ENCODE measurements at regions of chr10 and their contacts with region 1.

Region 1: DNA sequence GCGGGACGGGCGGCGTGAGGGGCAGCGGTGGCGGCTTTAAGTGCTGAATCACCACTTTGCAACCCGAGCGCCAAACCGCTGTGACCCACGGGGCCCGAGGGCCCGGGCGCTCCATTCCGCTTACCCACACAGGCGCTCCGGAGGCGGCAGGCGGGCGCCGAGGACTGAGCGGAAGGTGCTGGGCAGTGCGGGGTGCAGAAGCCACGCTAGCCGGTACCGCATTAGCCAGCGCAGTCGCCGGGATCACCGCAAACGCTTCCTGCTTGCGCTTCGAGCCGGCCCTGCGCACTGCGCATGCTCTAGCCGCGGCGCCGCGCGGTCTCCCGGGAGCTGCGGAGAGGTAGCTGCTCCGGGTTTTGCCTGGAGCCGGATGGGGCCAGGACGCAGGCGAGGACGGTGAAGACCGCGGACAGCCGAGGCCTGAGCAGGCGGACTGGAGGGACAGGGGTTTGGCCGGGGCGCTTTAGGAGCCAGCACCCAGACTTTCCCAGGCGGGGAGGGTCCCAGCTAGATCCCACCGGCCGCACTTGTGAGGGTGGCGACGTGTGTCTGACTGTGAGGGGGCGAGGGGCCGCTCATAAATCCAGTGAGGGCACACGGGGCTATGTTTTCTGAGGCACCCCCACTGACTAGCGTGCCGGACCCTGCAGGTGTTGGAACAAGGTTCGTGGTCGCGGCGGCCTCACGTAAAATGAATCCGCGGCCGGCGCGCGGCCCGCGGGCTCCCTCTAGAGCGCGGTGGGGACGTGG is at the start of gene IDE:
- DNase-seq: peak; percentile 91 to 97
- H3K4me3 ChIP-seq: peak within 1 kb of the TSS; percentile 69 to 94 (median 76)
- H3K27ac ChIP-seq: peak within 1 kb of the TSS; percentile 90 to 97 (median 95)
- H3K4me1 ChIP-seq: peaks cover 22 to 45% (median 31%) of the 10 kb centered on the region in 4 donors
- H3K27me3 ChIP-seq: no peaks in the 10 kb centered on the region
- CTCF ChIP-seq: peak in 5 of 7 experiments; percentile 56 to 85 (median 67)
- EP300 ChIP-seq: no peak
- POLR2A ChIP-seq: no peak
- total RNA-seq, gene IDE: 9.3 to 62.4 (median 29.0) TPM

Region 2: DNA sequence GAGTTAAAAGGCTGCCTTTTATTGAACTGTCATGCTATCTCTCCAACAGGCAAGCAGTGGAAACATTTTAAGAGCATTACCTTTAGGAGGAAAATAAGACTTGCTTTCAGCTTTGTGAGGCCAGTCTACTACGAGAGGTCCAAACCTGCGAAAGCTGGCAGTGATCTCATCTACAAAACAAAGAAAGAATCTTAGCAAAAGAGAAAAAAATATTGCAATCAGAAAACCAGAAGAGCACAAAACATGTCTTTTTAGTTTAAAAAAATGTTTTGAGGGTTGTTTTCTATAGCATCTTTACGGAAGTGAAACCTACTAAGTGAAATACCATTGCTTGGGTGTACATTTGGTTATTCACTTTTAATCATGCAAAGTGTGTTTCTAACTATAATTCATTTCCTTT is 431.0 kb before region 1 on chr10:
- intact Hi-C with region 1: no loop called
- DNase-seq: no peak
- H3K4me3 ChIP-seq: no peak overlapping the region
- H3K27ac ChIP-seq: no peak overlapping the region
- H3K4me1 ChIP-seq: peaks cover 0 to 34% (median 6%) of the 10 kb centered on the region in 4 donors
- H3K27me3 ChIP-seq: no peaks in the 10 kb centered on the region
- CTCF ChIP-seq: no peak
- EP300 ChIP-seq: no peak
- POLR2A ChIP-seq: no peak

Region 3: DNA sequence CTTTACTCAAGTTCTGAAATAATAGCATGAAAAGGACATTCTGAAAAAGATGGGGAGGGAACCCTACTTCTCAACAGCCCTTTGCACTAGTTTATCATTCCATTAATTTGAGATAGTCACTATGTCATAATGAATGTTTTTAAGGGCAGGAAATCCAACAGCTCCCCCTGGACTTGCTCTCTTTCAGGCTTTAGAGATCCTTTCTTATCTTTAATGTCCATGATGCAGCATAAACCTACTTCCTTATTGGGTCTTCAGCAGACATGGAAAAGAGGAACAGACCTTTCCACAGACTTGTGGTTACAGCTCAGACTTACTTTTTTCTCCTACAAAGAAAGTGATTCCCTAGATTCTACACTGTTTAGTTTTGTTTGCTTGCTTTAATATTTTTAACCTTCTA is 87.3 kb before region 1 on chr10:
- intact Hi-C with region 1: no loop called
- DNase-seq: no peak
- H3K4me3 ChIP-seq: no peak overlapping the region
- H3K27ac ChIP-seq: no peak overlapping the region
- H3K4me1 ChIP-seq: no peaks in the 10 kb centered on the region
- H3K27me3 ChIP-seq: no peaks in the 10 kb centered on the region
- CTCF ChIP-seq: no peak
- EP300 ChIP-seq: no peak
- POLR2A ChIP-seq: no peak

Region 4: GRCh38 chr10:92517034-92517655 is 56.8 kb before region 1 on chr10:
- intact Hi-C with region 1: loop called (anchors 5 kb)
- DNase-seq: peak; percentile 73 to 92
- H3K4me3 ChIP-seq: no peak overlapping the region
- H3K27ac ChIP-seq: no peak overlapping the region
- H3K4me1 ChIP-seq: peaks cover 0 to 5% (median 0%) of the 10 kb centered on the region in 4 donors
- H3K27me3 ChIP-seq: no peaks in the 10 kb centered on the region
- CTCF ChIP-seq: peak in 5 of 7 experiments; percentile 47 to 76 (median 72)
- EP300 ChIP-seq: no peak
- POLR2A ChIP-seq: no peak

Measured in stomach (tissue), 19 donors.